ENCODE measurements at regions of chr17 and their contacts with region 1.

Region 1: GRCh38 chr17:8222630-8223356 is 12.4 kb upstream of the AURKB start:
- DNase-seq: peak; percentile 92
- ATAC-seq: peak; percentile 49
- H3K4me3 Mint-ChIP-seq: peak overlapping the region; percentile 92
- H3K27ac Mint-ChIP-seq: peak overlapping the region; percentile 98
- H3K4me1 Mint-ChIP-seq: peaks cover 58% of the 10 kb centered on the region
- H3K27me3 Mint-ChIP-seq: peaks cover 2% of the 10 kb centered on the region

Region 2: DNA sequence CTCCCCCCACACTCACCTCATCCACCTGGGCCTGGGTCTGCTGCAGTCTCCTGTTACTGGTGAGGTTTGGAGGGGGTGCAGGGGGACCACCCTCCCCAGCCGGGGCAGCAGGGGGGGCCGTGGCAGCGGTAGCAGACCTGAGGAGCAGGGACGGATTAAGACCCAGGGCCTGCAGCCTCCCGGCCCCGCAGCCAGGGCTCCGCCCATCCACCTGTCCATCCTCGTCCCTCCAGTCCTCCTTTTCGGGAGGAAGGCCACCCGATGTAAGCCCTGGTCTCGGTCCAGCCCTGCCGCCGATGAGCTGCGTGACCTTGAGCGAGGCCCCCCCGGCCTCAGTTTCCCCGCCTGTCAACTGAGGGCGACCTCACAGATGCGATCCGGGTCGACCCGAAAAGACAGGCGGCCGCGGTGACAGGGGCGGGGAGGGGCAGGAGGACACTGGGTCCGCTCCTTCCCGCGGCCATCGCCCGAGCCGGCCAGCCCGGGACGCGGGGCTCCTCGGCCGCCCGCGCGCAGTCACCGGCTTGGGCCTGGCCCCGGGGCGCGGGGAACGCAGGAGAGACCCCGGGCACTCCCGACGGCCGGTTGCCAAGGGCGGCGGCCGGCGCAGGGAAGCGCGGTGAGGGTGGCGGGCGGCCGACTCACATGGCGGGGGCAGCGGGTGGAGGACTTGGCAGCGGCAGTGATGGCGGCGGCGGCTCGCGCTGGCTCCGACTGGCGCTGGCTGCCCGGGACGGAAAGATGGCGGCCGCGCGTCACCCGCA is 60.4 kb before region 1 on chr17 and contains the start of gene VAMP2:
- CTCF ChIA-PET with region 1: interaction called, 3 read pairs
- POLR2A ChIA-PET with region 1: interaction called, 18 read pairs
- DNase-seq: peak; percentile 87
- ATAC-seq: peak; percentile 58
- H3K4me3 Mint-ChIP-seq: peak within 1 kb of the TSS; percentile 79
- H3K27ac Mint-ChIP-seq: peak within 1 kb of the TSS; percentile 94
- H3K4me1 Mint-ChIP-seq: peaks cover 63% of the 10 kb centered on the region
- H3K27me3 Mint-ChIP-seq: no peaks in the 10 kb centered on the region
- total RNA-seq, gene VAMP2: 56.3 to 56.7 TPM

Region 3: GRCh38 chr17:8204761-8205555 is 17.8 kb before region 1 on chr17:
- CTCF ChIA-PET with region 1: interaction called, 14 read pairs
- POLR2A ChIA-PET with region 1: interaction called, 92 read pairs
- DNase-seq: no peak
- ATAC-seq: no peak
- H3K4me3 Mint-ChIP-seq: no peak overlapping the region
- H3K27ac Mint-ChIP-seq: peak overlapping the region; percentile 58
- H3K4me1 Mint-ChIP-seq: peaks cover 45% of the 10 kb centered on the region
- H3K27me3 Mint-ChIP-seq: no peaks in the 10 kb centered on the region

Region 4: GRCh38 chr17:8243827-8244226 is 21.0 kb after region 1 on chr17:
- CTCF ChIA-PET with region 1: interaction called, 46 read pairs
- POLR2A ChIA-PET with region 1: interaction called, 185 read pairs
- DNase-seq: peak; percentile 54
- ATAC-seq: no peak
- H3K4me3 Mint-ChIP-seq: no peak overlapping the region
- H3K27ac Mint-ChIP-seq: peak overlapping the region; percentile 60
- H3K4me1 Mint-ChIP-seq: peaks cover 40% of the 10 kb centered on the region
- H3K27me3 Mint-ChIP-seq: no peaks in the 10 kb centered on the region

Region 5: GRCh38 chr17:8300627-8301242 is 77.9 kb after region 1 on chr17:
- CTCF ChIA-PET with region 1: interaction called, 27 read pairs
- POLR2A ChIA-PET with region 1: interaction called, 20 read pairs
- DNase-seq: peak; percentile 74
- ATAC-seq: peak; percentile 93
- H3K4me3 Mint-ChIP-seq: no peak overlapping the region
- H3K27ac Mint-ChIP-seq: peak overlapping the region; percentile 37
- H3K4me1 Mint-ChIP-seq: peaks cover 18% of the 10 kb centered on the region
- H3K27me3 Mint-ChIP-seq: no peaks in the 10 kb centered on the region

Measured in activated CD8-positive, alpha-beta T cell treated with anti-CD3 and anti-CD28 coated beads, Interleukin-2, amount 10 ng/mL, durations not matched to agents 7 days and 5 days (primary cell).